Tibial artery (tissue), 4 donors: ENCODE measurements at regions of chr7 and their contacts with region 1.

Region 1: DNA sequence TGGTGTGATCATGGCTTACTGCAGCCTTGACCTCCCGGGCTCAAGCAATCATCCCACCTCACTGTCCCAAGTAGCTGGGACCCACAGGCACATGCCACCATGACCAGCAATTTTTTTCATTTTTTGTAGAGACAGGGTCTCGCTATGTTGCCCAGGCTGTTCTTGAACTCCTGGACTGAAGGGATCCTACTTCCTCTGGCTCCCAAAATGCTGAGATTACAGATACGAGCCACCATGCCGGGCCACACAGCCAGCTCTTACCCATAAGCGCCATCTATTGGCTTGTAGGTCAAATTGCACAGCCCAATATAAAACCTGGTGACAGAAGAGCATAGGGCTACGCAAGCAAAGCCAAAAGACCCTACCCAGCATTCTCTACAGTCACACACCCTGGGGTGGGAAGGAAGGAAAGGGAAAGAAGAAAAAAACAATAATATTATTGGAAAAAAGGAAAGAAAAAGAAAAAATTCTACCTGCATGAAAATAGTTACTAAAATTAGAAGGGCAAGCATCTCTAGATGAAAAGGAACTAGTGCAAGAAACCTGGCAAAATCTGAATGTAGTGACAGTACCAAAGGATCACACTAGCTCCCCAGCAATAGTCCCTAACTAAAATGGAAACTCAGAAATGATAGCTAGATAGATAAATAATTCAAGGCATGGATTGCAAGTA is 29.4 kb upstream of the AMPH start:
- DNase-seq: no peak
- H3K4me3 ChIP-seq: no peak overlapping the region
- H3K27ac ChIP-seq: no peak overlapping the region
- H3K4me1 ChIP-seq: no peaks in the 10 kb centered on the region
- H3K27me3 ChIP-seq: no peaks in the 10 kb centered on the region
- CTCF ChIP-seq: peak; percentile 43 to 53

Region 2: GRCh38 chr7:38398725-38399321 is 261.7 kb before region 1 on chr7:
- intact Hi-C with region 1: loop called (anchors 5 kb)
- DNase-seq: peak in 1 of 2 donors; percentile 33
- H3K4me3 ChIP-seq: no peak overlapping the region
- H3K27ac ChIP-seq: no peak overlapping the region
- H3K4me1 ChIP-seq: peaks cover 0 to 3% (median 0%) of the 10 kb centered on the region in 4 donors
- H3K27me3 ChIP-seq: no peaks in the 10 kb centered on the region
- CTCF ChIP-seq: peak; percentile 51 to 85

Region 3: DNA sequence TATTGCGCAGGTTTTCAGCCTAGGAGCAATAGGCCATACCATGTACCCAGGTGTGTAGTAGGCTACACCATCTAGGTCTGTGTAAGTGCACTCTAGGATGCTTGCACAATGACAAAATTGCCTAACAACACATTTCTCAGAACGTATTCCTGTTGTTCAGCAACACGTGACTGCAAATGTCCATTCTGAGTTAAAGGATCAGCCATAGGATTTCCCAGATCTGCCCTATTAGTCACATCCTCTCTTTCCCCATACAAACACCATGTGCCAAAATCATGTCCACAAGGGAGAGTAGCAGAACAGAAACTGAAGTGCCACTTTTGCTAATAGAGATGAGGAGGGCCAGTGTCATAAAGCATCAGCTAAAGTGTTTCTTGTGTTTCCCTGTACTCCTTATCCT is 13.2 kb after region 1 on chr7:
- intact Hi-C with region 1: no loop called
- DNase-seq: peak in 1 of 2 donors; percentile 30
- H3K4me3 ChIP-seq: no peak overlapping the region
- H3K27ac ChIP-seq: no peak overlapping the region
- H3K4me1 ChIP-seq: no peaks in the 10 kb centered on the region
- H3K27me3 ChIP-seq: no peaks in the 10 kb centered on the region
- CTCF ChIP-seq: no peak